AG04449 (cell line): ENCODE measurements at regions of chr12 and their contacts with region 1.

Region 1: DNA sequence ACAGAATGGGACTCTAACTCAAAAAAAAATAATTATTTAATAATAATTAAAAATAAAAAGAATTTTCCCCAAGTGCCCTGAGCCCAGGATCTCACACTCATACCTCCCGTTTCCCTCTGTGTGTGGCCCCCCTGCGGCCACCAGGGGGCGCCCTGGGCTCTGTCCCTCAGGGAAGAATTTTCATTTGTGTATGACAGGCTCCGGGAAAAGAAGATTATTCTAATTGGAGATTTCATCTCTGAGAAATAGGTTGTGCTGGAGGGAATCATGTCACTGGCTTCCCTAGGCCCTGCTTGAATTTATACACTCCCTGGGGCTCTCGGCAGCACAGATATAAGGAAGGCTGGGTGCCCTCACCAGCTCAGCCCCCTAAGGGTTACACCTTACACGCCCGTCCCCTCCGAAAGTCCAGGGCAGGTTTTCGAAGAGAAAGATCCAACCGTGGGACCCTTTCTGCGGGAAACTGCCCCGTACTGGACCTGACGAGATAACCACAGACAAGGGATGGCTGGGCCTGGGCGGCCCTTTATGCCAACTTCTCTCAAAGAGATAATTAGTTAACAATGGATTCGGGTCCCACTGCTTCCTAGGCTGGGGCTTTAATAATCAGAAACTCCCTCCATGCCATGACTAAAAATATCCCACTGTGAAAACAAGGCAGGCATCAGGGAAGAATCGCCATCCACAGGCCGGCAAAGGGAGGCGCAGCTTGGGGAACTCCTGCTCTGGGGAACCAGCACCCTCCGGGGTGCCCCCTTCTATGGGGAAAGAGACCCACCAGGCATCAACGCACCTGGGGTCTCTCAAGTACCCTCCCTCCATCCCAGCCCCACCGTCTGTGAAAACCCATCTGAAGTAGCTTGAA is 80.7 kb downstream of the KDM2B start:
- DNase-seq: no peak
- H3K4me3 ChIP-seq: no peak overlapping the region
- CTCF ChIP-seq: peak; percentile 89

Region 2: GRCh38 chr12:121439715-121440114 is 60.4 kb before region 1 on chr12:
- CTCF ChIA-PET with region 1: no interaction called
- POLR2A ChIA-PET with region 1: no interaction called
- DNase-seq: no peak
- H3K4me3 ChIP-seq: no peak overlapping the region
- CTCF ChIP-seq: no peak

Region 3: DNA sequence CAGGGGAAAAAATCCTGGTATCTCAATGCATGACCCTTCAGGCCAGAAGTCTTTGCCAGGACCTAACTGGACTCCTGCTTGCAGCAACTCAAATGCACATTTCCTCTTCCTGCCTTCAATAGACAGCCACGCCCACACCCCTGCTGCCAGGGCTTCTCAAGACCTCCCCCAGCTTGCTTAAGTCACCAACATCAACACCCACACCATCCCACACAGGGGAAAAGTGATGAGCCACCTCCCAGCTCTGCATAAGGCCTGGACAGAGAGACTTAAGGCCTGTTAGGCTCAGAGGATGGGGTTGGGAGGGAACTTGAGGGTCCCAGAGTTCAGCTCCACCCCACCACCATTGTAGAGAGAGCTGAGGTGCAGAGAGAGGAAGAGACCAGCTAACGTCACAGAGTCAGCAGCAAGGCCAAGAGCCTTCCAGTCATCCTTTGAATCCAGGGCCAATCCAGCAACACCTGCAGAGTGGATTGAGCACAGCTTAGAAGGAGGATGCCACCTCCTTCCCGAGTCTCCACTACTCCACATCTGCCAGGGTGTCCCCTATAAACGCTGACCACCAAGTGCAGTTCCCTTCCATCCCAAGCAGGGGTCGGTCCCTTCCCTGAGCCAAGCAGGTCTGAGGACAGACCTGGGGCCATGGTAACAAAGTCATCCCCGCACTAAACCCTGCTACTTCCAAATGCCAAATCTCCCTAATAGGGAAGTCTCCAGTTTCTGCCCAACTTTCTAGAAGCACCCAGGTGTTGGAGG is 30.6 kb after region 1 on chr12:
- CTCF ChIA-PET with region 1: interaction called, 13 read pairs
- POLR2A ChIA-PET with region 1: no interaction called
- DNase-seq: peak; percentile 33
- H3K4me3 ChIP-seq: no peak overlapping the region
- CTCF ChIP-seq: no peak

Region 4: GRCh38 chr12:121678716-121679580 is 178.8 kb after region 1 on chr12:
- CTCF ChIA-PET with region 1: interaction called, 191 read pairs
- POLR2A ChIA-PET with region 1: no interaction called
- DNase-seq: no peak
- H3K4me3 ChIP-seq: no peak overlapping the region
- CTCF ChIP-seq: no peak

Region 5: DNA sequence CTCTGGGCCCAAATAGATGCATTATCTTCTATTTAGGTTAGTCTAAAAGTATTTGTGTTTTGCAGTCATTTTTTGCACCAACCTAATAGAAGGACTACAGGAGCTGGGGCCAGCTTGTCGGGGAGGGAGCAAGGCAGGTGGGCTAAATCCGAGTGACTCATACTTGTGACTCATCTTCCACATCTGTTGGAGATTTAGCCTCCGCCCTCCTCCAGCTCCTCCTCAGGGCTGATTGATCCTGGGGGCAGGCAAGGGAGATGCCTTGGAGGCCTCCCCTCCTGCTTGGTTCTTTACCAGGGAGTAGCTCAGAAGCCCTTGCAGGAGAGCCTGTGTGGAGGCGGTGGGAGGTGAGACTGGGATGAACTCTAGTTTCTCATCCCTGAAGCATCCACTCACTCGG is 265.4 kb after region 1 on chr12:
- CTCF ChIA-PET with region 1: no interaction called
- POLR2A ChIA-PET with region 1: no interaction called
- DNase-seq: no peak
- H3K4me3 ChIP-seq: no peak overlapping the region
- CTCF ChIP-seq: no peak

Region 6: GRCh38 chr12:122681814-122682213 is 1181.7 kb after region 1 on chr12:
- CTCF ChIA-PET with region 1: no interaction called
- POLR2A ChIA-PET with region 1: no interaction called
- DNase-seq: no peak
- H3K4me3 ChIP-seq: no peak overlapping the region
- CTCF ChIP-seq: no peak